Panc1 (cell line): ENCODE measurements at regions of chr13 and their contacts with region 1.

Region 1: GRCh38 chr13:94822356-94822755 is 110.0 kb upstream of the SOX21 start:
- DNase-seq: no peak
- ATAC-seq: no peak
- H3K4me3 ChIP-seq: no peak overlapping the region
- H3K27ac ChIP-seq: no peak overlapping the region
- H3K4me1 ChIP-seq: no peaks in the 10 kb centered on the region
- H3K27me3 ChIP-seq: no peaks in the 10 kb centered on the region
- CTCF ChIP-seq: no peak

Region 2: GRCh38 chr13:95156208-95156607 is 333.9 kb after region 1 on chr13:
- CTCF ChIA-PET with region 1: no interaction called
- POLR2A ChIA-PET with region 1: no interaction called
- in situ Hi-C with region 1: no loop called
- intact Hi-C with region 1: no loop called
- DNase-seq: no peak
- ATAC-seq: no peak
- H3K4me3 ChIP-seq: no peak overlapping the region
- H3K27ac ChIP-seq: peak overlapping the region; percentile 73
- H3K4me1 ChIP-seq: peaks cover 12% of the 10 kb centered on the region
- H3K27me3 ChIP-seq: no peaks in the 10 kb centered on the region
- CTCF ChIP-seq: peak; percentile 47; the same call in 1 of the 2 replicates

Region 3: GRCh38 chr13:95471960-95472359 is 649.6 kb after region 1 on chr13:
- CTCF ChIA-PET with region 1: no interaction called
- POLR2A ChIA-PET with region 1: interaction called, 10 read pairs
- in situ Hi-C with region 1: no loop called
- intact Hi-C with region 1: no loop called
- DNase-seq: no peak
- ATAC-seq: no peak
- H3K4me3 ChIP-seq: no peak overlapping the region
- H3K27ac ChIP-seq: no peak overlapping the region
- H3K4me1 ChIP-seq: no peaks in the 10 kb centered on the region
- H3K27me3 ChIP-seq: no peaks in the 10 kb centered on the region
- CTCF ChIP-seq: no peak